Caco-2 (cell line): ENCODE measurements at regions of chr6 and their contacts with region 1.

Region 1: DNA sequence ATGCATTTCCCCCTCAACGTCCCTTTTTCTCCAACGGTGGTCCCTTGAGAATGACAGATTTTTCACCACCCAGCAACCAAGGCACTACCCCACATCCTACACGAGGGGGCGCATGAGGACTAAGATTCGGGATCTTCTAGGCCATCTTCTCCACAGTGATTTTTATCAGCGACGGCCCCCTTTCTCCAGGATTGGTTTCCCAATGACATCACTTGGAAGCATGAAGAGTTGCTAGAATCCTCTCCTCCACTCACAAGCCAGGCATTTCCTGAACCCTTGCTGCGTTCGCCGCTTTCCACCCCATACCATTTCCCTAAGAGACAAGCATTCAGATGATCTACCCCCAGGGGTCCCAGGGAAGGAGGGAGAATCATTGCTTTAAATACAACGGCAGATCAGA is 252.0 kb downstream of the HIVEP2 start:
- DNase-seq: peak; percentile 56 to 66
- H3K4me3 ChIP-seq: no peak overlapping the region
- H3K4me3 Mint-ChIP-seq: no peak overlapping the region
- H3K27ac Mint-ChIP-seq: no peak overlapping the region
- H3K4me1 ChIP-seq: no peaks in the 10 kb centered on the region
- H3K4me1 Mint-ChIP-seq: no peaks in the 10 kb centered on the region
- H3K27me3 ChIP-seq: no peaks in the 10 kb centered on the region; the same call in 1 of the 2 replicates
- H3K27me3 Mint-ChIP-seq: peaks cover 3% of the 10 kb centered on the region
- CTCF ChIP-seq: peak; percentile 81 to 90

Region 2: DNA sequence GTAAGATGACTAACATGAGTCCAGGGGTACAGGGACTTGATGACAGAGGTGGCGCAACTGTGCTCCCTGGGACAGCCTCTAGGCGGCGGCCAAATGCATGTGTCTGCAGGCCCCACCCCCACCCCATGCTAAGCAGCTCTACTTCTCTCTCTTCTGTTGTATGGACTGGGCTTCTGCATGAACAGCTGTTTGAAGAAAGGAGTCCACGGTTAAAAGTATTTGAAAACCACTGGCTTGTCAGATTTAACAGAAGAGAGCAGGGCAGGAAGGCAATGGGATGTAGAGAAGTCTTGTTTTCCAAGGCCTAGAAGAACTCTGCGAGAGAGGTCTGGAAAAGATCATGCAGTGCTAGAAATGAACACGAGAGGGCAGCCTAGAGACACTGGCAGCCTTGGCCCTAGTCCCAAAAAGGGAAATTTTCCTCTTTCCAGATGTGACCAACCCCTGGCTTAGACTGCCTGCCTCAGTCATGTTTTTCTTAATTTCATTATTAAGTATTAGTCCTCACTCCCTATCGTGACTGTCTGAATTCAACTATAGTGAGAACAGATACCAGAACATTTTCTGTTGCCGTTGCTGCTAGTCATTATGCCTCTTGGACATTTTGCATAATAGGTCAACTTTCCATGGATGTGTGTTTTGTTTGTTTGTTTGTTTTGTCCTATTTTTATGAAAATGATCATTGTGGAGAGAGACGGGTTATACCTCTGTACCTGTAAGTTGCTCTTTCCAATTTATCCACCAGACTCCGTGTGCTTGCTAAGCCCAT is 126.1 kb before region 1 on chr6:
- CTCF ChIA-PET with region 1: no interaction called
- POLR2A ChIA-PET with region 1: no interaction called
- intact Hi-C with region 1: loop called (anchors 2 kb)
- DNase-seq: peak; percentile 53 to 79
- H3K4me3 ChIP-seq: no peak overlapping the region
- H3K4me3 Mint-ChIP-seq: no peak overlapping the region
- H3K27ac Mint-ChIP-seq: no peak overlapping the region
- H3K4me1 ChIP-seq: no peaks in the 10 kb centered on the region
- H3K4me1 Mint-ChIP-seq: no peaks in the 10 kb centered on the region
- H3K27me3 ChIP-seq: no peaks in the 10 kb centered on the region
- H3K27me3 Mint-ChIP-seq: peaks cover 6% of the 10 kb centered on the region
- CTCF ChIP-seq: peak; percentile 77 to 79

Region 3: DNA sequence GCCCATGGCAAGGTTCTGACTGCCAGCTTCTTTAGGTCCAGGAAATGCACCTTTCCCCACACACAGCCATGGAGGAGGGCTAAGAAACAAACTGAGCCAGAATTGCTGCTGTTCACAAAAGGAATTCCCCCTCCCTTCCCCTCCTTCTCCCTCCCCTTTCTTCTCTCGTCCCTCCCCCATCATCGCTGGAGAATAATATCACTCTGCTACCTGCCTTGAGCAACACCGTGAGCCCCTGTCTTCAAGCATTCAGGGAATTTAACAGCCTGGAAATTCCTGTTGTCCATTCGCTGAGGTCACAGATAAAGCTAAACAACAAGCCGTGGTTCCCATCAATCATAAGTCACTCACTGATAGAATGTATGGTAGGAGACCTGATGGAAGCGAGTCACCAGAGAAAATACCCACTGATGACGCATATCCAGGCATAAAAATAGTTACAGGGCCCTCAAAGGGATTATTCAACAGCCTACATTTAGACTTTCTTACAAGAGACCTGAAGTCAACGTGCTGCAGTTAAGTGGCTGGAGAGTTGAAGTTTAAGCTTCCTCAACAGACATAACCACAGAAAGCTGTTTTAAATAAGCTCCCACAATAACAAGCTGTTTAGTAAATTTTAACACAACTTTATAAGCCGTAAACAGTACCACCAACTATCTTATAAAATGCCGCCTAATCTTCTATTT is 192.4 kb after region 1 on chr6:
- CTCF ChIA-PET with region 1: no interaction called
- POLR2A ChIA-PET with region 1: no interaction called
- intact Hi-C with region 1: loop called (anchors 1 kb)
- DNase-seq: peak; percentile 76 to 87
- H3K4me3 ChIP-seq: no peak overlapping the region
- H3K4me3 Mint-ChIP-seq: peak overlapping the region; percentile 60
- H3K27ac Mint-ChIP-seq: peak overlapping the region; percentile 65
- H3K4me1 ChIP-seq: peaks cover 34% of the 10 kb centered on the region
- H3K4me1 Mint-ChIP-seq: peaks cover 13% of the 10 kb centered on the region
- H3K27me3 ChIP-seq: no peaks in the 10 kb centered on the region
- H3K27me3 Mint-ChIP-seq: peaks cover 5% of the 10 kb centered on the region
- CTCF ChIP-seq: no peak

Region 4: GRCh38 chr6:143279385-143279784 is 586.4 kb after region 1 on chr6:
- CTCF ChIA-PET with region 1: no interaction called
- POLR2A ChIA-PET with region 1: no interaction called
- intact Hi-C with region 1: loop called (anchors 1 kb)
- DNase-seq: peak; percentile 54 to 62
- H3K4me3 ChIP-seq: no peak overlapping the region
- H3K4me3 Mint-ChIP-seq: no peak overlapping the region
- H3K27ac Mint-ChIP-seq: no peak overlapping the region
- H3K4me1 ChIP-seq: no peaks in the 10 kb centered on the region
- H3K4me1 Mint-ChIP-seq: peaks cover 7% of the 10 kb centered on the region
- H3K27me3 ChIP-seq: no peaks in the 10 kb centered on the region
- H3K27me3 Mint-ChIP-seq: no peaks in the 10 kb centered on the region
- CTCF ChIP-seq: peak; percentile 55 to 58

Region 5: DNA sequence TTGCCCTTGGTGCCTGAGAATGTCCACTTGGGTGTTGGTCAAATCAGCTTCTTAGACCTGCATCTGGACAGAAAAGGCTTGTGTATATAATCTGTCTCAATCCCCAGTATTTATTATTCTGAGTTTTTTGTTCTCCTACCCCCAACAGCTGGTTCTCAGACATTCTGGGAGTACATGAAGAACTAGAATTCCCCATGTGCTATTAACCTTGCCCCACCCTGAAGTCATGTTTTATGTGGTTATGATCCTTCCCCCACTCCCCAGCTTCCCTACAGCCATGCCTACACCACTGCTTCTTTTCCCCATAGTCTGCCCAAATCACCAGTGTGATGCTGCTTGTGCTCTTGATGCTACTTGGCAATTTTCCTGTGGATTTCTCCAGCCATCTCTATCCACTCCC is 600.6 kb after region 1 on chr6:
- CTCF ChIA-PET with region 1: no interaction called
- POLR2A ChIA-PET with region 1: no interaction called
- intact Hi-C with region 1: no loop called
- DNase-seq: no peak
- H3K4me3 ChIP-seq: no peak overlapping the region
- H3K4me3 Mint-ChIP-seq: no peak overlapping the region
- H3K27ac Mint-ChIP-seq: no peak overlapping the region
- H3K4me1 ChIP-seq: no peaks in the 10 kb centered on the region
- H3K4me1 Mint-ChIP-seq: no peaks in the 10 kb centered on the region
- H3K27me3 ChIP-seq: no peaks in the 10 kb centered on the region
- H3K27me3 Mint-ChIP-seq: no peaks in the 10 kb centered on the region
- CTCF ChIP-seq: no peak

Region 6: GRCh38 chr6:143427109-143427817 is 734.3 kb after region 1 on chr6:
- CTCF ChIA-PET with region 1: interaction called, 3 read pairs
- POLR2A ChIA-PET with region 1: no interaction called
- intact Hi-C with region 1: loop called (anchors 1 kb)
- DNase-seq: peak; percentile 68 to 78
- H3K4me3 ChIP-seq: no peak overlapping the region
- H3K4me3 Mint-ChIP-seq: no peak overlapping the region
- H3K27ac Mint-ChIP-seq: no peak overlapping the region
- H3K4me1 ChIP-seq: no peaks in the 10 kb centered on the region
- H3K4me1 Mint-ChIP-seq: no peaks in the 10 kb centered on the region
- H3K27me3 ChIP-seq: no peaks in the 10 kb centered on the region
- H3K27me3 Mint-ChIP-seq: no peaks in the 10 kb centered on the region
- CTCF ChIP-seq: peak; percentile 90 to 99